Colonic mucosa (tissue), 4 donors: ENCODE measurements at regions of chr4 and their contacts with region 1.

Region 1: DNA sequence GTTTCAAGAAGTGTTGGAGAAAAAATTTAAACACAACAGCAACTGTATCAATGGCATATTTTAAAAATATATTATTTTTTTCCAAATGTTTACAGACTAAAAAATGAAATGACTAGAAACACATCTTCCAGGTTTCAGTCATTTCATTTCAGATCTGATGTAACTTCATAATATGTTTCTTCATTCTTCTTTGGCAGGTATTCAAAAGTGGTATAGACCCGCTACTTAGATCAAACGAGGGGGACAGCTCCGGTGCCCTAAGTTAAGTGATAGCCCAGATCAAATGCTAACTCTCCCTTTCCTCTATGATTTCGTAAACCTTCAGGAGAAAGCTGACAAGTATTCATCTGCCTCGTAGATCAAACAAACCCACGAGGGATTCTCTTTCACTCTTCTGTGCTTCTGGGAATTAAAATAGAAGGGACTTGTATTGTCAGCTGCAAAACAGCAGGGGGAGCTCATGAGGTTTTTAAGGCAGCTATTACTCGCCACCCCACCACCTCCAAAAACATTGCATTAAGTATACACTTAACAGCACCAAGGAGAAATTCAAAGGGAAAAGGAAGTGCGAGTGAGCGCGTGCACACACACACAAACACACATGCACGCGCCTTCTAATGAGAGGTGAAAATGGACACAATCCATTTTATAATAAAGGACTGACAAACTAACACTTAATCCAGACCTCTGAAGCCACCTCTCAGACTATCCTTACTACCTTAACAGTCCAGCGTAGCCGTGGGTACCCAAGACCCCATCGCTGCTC is 21.4 kb downstream of the HELT start:
- DNase-seq: peak; percentile 39
- H3K4me3 ChIP-seq: no peak overlapping the region
- H3K27ac ChIP-seq: no peak overlapping the region
- H3K4me1 ChIP-seq: no peaks in the 10 kb centered on the region
- H3K27me3 ChIP-seq: no peaks in the 10 kb centered on the region
- CTCF ChIP-seq: peak; percentile 76

Region 2: DNA sequence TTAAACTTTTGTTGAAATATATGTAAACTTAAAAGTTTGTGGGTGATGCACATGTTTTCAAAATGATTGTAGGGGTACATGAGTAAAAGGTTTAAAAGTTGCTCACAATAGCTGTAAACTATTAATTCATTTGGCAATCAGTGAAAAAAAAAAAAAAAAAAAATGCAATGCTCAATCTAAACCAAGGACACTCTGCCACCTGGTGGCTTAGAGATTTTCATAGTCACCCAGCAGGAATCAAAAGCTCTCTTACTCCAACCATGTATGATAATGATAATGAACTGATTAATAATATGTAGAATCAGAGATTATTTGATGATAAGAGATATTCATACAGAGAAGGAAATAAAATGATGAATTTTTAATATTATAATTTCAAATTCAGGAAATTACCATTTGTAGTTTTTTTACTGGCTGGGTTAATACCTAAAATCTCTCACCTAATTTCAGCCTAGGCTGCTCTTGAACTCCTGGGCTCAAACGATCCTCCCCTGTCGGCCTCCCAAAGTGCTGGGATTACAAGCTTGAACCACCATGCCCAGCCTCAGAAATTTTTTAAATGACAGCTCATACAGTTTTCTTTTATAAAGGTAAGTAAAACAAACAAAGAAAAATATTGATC is 56.5 kb after region 1 on chr4:
- intact Hi-C with region 1: loop called (anchors 5 kb)
- DNase-seq: peak; percentile 29
- H3K4me3 ChIP-seq: no peak overlapping the region
- H3K27ac ChIP-seq: no peak overlapping the region
- H3K4me1 ChIP-seq: no peaks in the 10 kb centered on the region
- H3K27me3 ChIP-seq: no peaks in the 10 kb centered on the region
- CTCF ChIP-seq: peak; percentile 39

Region 3: DNA sequence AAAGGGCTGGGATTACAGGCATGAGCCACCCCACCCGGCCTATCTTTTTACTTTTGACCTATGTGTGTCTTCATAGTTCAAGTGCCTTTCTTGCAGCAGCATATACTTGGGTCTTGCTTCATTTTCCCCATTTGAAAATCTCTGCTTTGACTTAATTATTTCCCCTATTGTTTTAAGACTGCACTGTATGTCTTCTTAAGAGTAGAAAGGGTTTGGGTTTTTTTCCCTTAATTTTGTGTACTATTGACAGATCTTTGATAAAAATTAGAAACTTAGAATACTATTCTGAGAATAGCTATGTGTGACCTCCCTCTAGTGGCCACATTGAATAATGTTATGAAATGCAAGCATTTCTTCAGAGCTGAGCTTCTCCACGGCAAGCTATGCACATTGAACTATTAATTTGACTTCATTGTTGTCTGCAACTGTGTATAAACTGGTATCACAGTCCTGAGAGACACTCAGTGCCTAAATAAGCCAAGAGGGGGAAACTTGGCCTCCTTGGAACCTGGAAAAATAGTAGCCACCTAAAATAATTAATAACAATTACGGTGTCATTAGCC is 94.7 kb after region 1 on chr4:
- intact Hi-C with region 1: loop called (anchors 2 kb)
- DNase-seq: no peak
- H3K4me3 ChIP-seq: no peak overlapping the region
- H3K27ac ChIP-seq: no peak overlapping the region
- H3K4me1 ChIP-seq: no peaks in the 10 kb centered on the region
- H3K27me3 ChIP-seq: no peaks in the 10 kb centered on the region
- CTCF ChIP-seq: peak; percentile 84